AG04450 (cell line): ENCODE measurements at regions of chr9 and their contacts with region 1.

Region 1: DNA sequence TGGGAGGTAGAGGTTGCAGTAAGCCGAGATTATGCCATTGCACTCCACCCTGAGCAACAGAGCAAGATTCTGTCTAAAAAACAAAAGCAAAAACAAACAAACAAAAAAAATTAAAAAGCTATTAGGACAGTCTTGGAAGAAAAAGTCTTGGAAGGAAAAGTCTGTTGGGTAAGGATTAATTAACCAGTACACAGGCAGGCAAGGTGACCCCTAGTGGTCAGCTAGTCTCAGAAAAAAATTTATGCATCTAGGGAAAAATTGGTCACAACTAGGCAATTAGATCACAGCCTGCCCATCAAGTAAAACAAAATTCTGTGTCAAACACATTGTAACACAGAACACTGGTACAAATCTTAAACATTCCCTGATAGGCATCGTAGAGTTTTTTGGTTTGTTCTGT is 6.7 kb upstream of the ANKRD18B start:
- DNase-seq: no peak
- H3K4me3 ChIP-seq: no peak overlapping the region
- H3K27ac ChIP-seq: peak overlapping the region; percentile 31
- H3K27me3 ChIP-seq: no peaks in the 10 kb centered on the region
- CTCF ChIP-seq: peak; percentile 69

Region 2: DNA sequence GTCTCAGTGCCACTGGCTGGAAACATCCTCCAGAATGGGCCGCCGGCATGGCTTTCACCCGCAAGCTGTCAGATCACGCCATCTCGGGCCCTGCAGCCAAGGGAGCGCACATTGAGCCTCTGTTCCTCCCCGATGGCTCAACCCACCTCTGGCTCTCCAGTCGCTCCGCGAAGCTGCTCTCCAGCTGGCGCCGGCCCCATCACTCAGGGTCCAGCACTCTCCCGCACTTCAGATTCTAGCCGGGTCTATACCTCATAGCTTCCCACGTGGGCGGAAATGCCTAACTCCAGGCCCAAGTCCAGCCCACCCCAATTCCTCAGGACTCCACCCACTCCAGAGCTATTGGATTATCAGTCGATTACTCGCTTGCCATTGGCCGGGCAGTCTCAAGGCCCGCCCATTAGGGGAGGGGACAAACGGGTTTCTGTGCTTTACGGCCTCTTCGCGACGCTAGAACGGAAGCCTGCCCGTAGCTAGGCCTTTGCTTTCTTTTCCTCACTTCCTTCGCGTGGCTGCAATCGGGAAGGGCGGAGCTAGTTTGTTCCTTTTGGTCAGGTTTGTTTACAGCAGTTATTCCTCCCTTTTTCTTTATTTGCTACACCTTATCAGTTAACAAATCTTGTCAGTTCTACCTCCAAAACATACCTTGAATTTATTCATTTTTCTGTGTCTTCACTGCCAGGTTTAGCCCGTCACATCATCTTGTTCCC is 43.6 kb before region 1 on chr9 and contains the start of gene NOL6:
- CTCF ChIA-PET with region 1: interaction called, 14 read pairs
- POLR2A ChIA-PET with region 1: interaction called, 7 read pairs
- DNase-seq: peak; percentile 98
- H3K4me3 ChIP-seq: peak within 1 kb of the TSS; percentile 99
- H3K27ac ChIP-seq: peak within 1 kb of the TSS; percentile 52
- H3K27me3 ChIP-seq: no peaks in the 10 kb centered on the region
- CTCF ChIP-seq: no peak
- polyA plus RNA-seq, gene NOL6: 34.7 and 42.6 TPM in 2 replicates

Region 3: DNA sequence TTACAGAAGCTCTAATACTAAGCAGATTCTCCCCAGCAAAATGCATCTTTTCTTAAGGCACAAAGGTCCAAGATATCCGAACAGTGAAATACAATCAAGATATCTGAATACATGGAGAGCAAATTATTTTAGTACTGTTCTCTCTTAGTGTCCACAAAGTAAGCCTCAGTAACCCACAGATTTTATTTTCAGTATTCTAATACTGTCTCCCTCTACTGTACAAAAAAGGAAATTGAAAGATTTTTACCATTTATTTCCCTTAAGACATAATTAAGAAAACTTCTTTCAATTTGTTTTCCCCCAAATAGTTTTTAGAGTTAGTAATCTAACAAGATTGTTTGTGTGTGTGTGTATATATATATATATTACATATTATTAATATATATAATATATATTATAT is 19.0 kb before region 1 on chr9:
- CTCF ChIA-PET with region 1: interaction called, 15 read pairs
- POLR2A ChIA-PET with region 1: no interaction called
- DNase-seq: no peak
- H3K4me3 ChIP-seq: no peak overlapping the region
- H3K27ac ChIP-seq: no peak overlapping the region
- H3K27me3 ChIP-seq: no peaks in the 10 kb centered on the region
- CTCF ChIP-seq: peak; percentile 45

Region 4: GRCh38 chr9:33506626-33507370 is 10.6 kb before region 1 on chr9:
- CTCF ChIA-PET with region 1: interaction called, 12 read pairs
- POLR2A ChIA-PET with region 1: no interaction called
- DNase-seq: peak; percentile 87
- H3K4me3 ChIP-seq: peak overlapping the region; percentile 48
- H3K27ac ChIP-seq: peak overlapping the region; percentile 96
- H3K27me3 ChIP-seq: no peaks in the 10 kb centered on the region
- CTCF ChIP-seq: no peak

Region 5: GRCh38 chr9:33714989-33715388 is 197.6 kb after region 1 on chr9:
- CTCF ChIA-PET with region 1: no interaction called
- POLR2A ChIA-PET with region 1: no interaction called
- DNase-seq: no peak
- H3K4me3 ChIP-seq: no peak overlapping the region
- H3K27ac ChIP-seq: no peak overlapping the region
- H3K27me3 ChIP-seq: peaks cover 20% of the 10 kb centered on the region
- CTCF ChIP-seq: no peak

Region 6: GRCh38 chr9:34059281-34059680 is 541.9 kb after region 1 on chr9:
- CTCF ChIA-PET with region 1: no interaction called
- POLR2A ChIA-PET with region 1: no interaction called
- DNase-seq: no peak
- H3K4me3 ChIP-seq: no peak overlapping the region
- H3K27ac ChIP-seq: no peak overlapping the region
- H3K27me3 ChIP-seq: peaks cover 3% of the 10 kb centered on the region
- CTCF ChIP-seq: no peak